Panc1 (cell line): ENCODE measurements at regions of chr12 and their contacts with region 1.

Region 1: GRCh38 chr12:55940065-55940732 is 9.2 kb downstream of the DGKA start:
- DNase-seq: peak; percentile 81
- ATAC-seq: peak; percentile 99
- H3K4me3 ChIP-seq: peak overlapping the region; percentile 19 to 48
- H3K27ac ChIP-seq: 0 out of 2 replicates have a peak overlapping the region, but pooled peaks have one; percentile 31
- H3K4me1 ChIP-seq: peaks cover 4% of the 10 kb centered on the region; the same call in 1 of the 2 replicates
- H3K27me3 ChIP-seq: no peaks in the 10 kb centered on the region
- CTCF ChIP-seq: peak; percentile 96

Region 2: DNA sequence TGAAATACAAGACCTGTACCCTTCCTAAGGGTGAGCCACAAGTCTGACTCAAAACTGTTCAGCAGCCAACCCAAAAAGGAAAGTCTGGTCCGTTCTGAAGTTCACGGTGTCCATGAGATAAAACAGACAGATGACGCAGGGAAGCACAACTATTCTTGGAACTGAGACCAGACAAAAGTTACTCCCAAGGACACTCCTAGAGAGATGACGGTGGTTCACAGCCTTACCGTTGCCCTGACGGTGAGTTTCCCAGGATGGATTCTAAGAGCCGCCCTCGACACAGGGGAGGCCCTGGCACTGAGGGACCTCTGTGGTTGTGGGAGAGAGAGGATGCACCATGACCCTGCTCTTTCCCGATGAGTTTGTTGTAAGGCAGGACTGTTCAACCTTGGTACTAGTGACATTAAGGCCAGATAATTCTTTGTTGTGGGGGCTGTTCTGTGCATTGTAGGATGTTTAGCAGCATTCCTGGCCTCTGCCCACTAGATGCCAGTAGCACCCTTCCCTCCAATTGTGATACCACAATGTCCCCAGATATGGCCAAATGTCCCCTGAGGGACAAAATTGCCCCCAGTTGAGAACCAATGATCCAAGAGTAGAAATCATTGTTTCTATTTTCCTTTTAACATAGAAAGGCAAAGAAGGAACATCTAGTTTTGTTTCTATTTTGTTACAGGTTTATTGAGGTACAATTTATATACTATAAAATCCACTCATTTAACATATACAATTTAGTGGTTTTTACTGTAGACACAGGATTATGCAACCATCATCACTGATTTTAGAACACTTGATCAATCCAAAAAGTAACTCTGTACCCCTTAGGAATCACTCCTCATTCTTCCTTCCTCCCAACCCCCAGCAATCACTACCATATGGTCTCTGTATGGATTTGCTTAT is 280.5 kb before region 1 on chr12:
- CTCF ChIA-PET with region 1: interaction called, 11 read pairs
- POLR2A ChIA-PET with region 1: no interaction called
- in situ Hi-C with region 1: no loop called
- intact Hi-C with region 1: no loop called
- DNase-seq: no peak
- ATAC-seq: peak; percentile 79; the same call in 1 of the 2 replicates
- H3K4me3 ChIP-seq: no peak overlapping the region
- H3K27ac ChIP-seq: no peak overlapping the region
- H3K4me1 ChIP-seq: no peaks in the 10 kb centered on the region
- H3K27me3 ChIP-seq: peaks cover 4% of the 10 kb centered on the region; the same call in 1 of the 2 replicates
- CTCF ChIP-seq: peak; percentile 80

Region 3: DNA sequence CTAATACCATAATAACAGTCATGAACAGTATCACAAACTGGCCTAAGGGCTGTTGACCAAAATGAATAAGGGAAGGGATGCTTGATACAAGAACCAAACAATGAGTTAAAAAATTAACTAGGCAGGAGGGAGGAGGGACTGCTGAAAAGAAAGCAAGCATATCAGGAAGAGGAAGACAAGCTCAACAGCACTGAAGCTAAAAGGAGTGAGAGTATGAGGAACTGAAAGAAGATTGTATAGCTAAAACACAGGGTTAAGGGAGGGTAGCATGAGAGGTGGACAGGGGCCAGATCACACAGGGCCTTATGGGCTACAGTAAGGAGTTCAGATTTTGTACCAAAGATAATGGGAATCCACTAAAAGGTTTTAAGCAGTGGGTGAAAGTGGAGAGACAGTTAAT is 266.6 kb before region 1 on chr12:
- CTCF ChIA-PET with region 1: no interaction called
- POLR2A ChIA-PET with region 1: no interaction called
- in situ Hi-C with region 1: no loop called
- intact Hi-C with region 1: no loop called
- DNase-seq: no peak
- ATAC-seq: no peak
- H3K4me3 ChIP-seq: no peak overlapping the region
- H3K27ac ChIP-seq: no peak overlapping the region
- H3K4me1 ChIP-seq: no peaks in the 10 kb centered on the region
- H3K27me3 ChIP-seq: peaks cover 8% of the 10 kb centered on the region; the same call in 1 of the 2 replicates
- CTCF ChIP-seq: no peak

Region 4: GRCh38 chr12:55847603-55848291 is 92.5 kb before region 1 on chr12:
- CTCF ChIA-PET with region 1: no interaction called
- POLR2A ChIA-PET with region 1: no interaction called
- in situ Hi-C with region 1: no loop called
- intact Hi-C with region 1: no loop called
- DNase-seq: no peak
- ATAC-seq: peak; percentile 62; the same call in 1 of the 2 replicates
- H3K4me3 ChIP-seq: no peak overlapping the region
- H3K27ac ChIP-seq: no peak overlapping the region
- H3K4me1 ChIP-seq: no peaks in the 10 kb centered on the region
- H3K27me3 ChIP-seq: peaks cover 4% of the 10 kb centered on the region; the same call in 1 of the 2 replicates
- CTCF ChIP-seq: no peak

Region 5: GRCh38 chr12:55926738-55927587 is 13.2 kb before region 1 on chr12:
- CTCF ChIA-PET with region 1: interaction called, 11 read pairs
- POLR2A ChIA-PET with region 1: no interaction called
- in situ Hi-C with region 1: no loop called
- intact Hi-C with region 1: no loop called
- DNase-seq: peak; percentile 84
- ATAC-seq: peak; percentile 89
- H3K4me3 ChIP-seq: peak overlapping the region; percentile 67 to 91
- H3K27ac ChIP-seq: peak overlapping the region; percentile 100
- H3K4me1 ChIP-seq: peaks cover 32% of the 10 kb centered on the region
- H3K27me3 ChIP-seq: no peaks in the 10 kb centered on the region
- CTCF ChIP-seq: peak; percentile 96

Region 6: GRCh38 chr12:55982319-55982936 is 42.2 kb after region 1 on chr12:
- CTCF ChIA-PET with region 1: interaction called, 10 read pairs
- POLR2A ChIA-PET with region 1: no interaction called
- in situ Hi-C with region 1: no loop called
- intact Hi-C with region 1: no loop called
- DNase-seq: no peak
- ATAC-seq: no peak
- H3K4me3 ChIP-seq: no peak overlapping the region
- H3K27ac ChIP-seq: no peak overlapping the region
- H3K4me1 ChIP-seq: no peaks in the 10 kb centered on the region
- H3K27me3 ChIP-seq: no peaks in the 10 kb centered on the region
- CTCF ChIP-seq: no peak